Aorta (tissue), 5 donors: ENCODE measurements at regions of chrX and their contacts with region 1.

Region 1: GRCh38 chrX:81259020-81259713 is 57.3 kb downstream of the SH3BGRL start:
- DNase-seq: no peak
- ATAC-seq: no peak
- H3K4me3 ChIP-seq: no peak overlapping the region
- H3K27ac ChIP-seq: no peak overlapping the region
- H3K4me1 ChIP-seq: no peaks in the 10 kb centered on the region
- H3K27me3 ChIP-seq: no peaks in the 10 kb centered on the region

Region 2: GRCh38 chrX:81201671-81202455 is 57.3 kb before region 1 on chrX and contains the starts of genes HMGN5 and SH3BGRL:
- intact Hi-C with region 1: loop called in 1 of 2 experiments (anchors 2 kb)
- DNase-seq: peak; percentile 89 to 92
- ATAC-seq: peak; percentile 95
- H3K4me3 ChIP-seq: peak within 1 kb of the TSS; percentile 82 to 83
- H3K27ac ChIP-seq: peak within 1 kb of the TSS; percentile 64 to 87
- H3K4me1 ChIP-seq: no peaks in the 10 kb centered on the region
- H3K27me3 ChIP-seq: no peaks in the 10 kb centered on the region
- total RNA-seq, gene HMGN5: 7.1 to 8.3 TPM
- total RNA-seq, gene SH3BGRL: 199 to 207 TPM

Region 3: GRCh38 chrX:81229229-81229628 is 29.9 kb before region 1 on chrX:
- intact Hi-C with region 1: no loop called
- DNase-seq: no peak
- ATAC-seq: no peak
- H3K4me3 ChIP-seq: no peak overlapping the region
- H3K27ac ChIP-seq: no peak overlapping the region
- H3K4me1 ChIP-seq: no peaks in the 10 kb centered on the region
- H3K27me3 ChIP-seq: no peaks in the 10 kb centered on the region